ENCODE measurements at regions of chr3 and their contacts with region 1.

Region 1: GRCh38 chr3:129383292-129383860 is 45.1 kb downstream of the EFCAB12 start:
- DNase-seq: peak; percentile 52
- ATAC-seq: peak; percentile 85

Region 2: GRCh38 chr3:129934234-129935123 is 551.1 kb after region 1 on chr3:
- intact Hi-C with region 1: loop called (anchors 10 kb)
- DNase-seq: no peak
- ATAC-seq: no peak